IMR-90 (cell line): ENCODE measurements at regions of chr3 and their contacts with region 1.

Region 1: GRCh38 chr3:139654637-139655365 is 23.0 kb downstream of the NMNAT3 start:
- DNase-seq: no peak
- ATAC-seq: no peak
- H3K4me3 ChIP-seq: no peak overlapping the region
- H3K27ac ChIP-seq: no peak overlapping the region
- H3K4me1 ChIP-seq: no peaks in the 10 kb centered on the region
- H3K27me3 ChIP-seq: no peaks in the 10 kb centered on the region
- CTCF ChIP-seq: no peak
- POLR2A ChIP-seq: no peak
- RAD21 ChIP-seq: no peak

Region 2: DNA sequence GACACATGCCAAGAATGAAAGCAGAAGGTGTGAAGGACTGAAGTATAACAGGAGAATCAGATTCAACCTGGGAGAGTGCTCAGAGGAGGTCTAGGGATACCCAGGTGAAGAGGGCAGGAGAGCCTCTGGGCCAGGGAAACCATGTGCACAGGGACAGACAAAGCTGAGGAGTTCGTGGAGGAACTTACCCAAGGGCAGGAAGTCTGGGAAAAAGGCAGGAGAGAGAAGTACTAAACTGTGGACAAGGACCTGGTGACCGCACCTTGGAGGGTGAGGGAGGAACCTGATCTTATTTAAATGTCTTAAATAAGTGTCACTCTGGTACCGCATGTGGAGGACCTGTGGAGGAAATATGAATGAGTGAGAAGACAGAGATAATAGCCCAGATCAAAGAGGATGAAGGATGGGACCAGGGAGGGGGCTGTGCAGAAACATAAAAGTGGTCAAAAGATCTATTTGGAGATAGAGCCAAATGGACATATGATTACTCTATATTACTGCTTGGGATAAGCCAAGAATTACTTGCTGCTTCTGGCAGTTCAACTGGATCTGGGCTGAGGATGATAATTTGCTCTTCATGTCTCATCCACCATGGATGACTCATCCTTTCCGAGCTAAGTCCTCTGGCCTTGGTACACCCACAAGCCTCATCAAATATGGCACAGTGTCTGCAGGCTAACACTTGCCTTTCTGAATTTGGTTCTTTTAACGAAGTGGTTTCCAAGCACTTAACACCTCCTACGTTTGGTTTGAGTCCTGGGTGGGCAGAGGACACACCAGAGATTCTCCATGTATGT is 139.9 kb after region 1 on chr3:
- CTCF ChIA-PET with region 1: no interaction called
- POLR2A ChIA-PET with region 1: no interaction called
- dilution Hi-C with region 1: no loop called
- in situ Hi-C with region 1: no loop called
- intact Hi-C with region 1: loop called (anchors 5 kb)
- DNase-seq: no peak
- ATAC-seq: no peak
- H3K4me3 ChIP-seq: no peak overlapping the region
- H3K27ac ChIP-seq: no peak overlapping the region
- H3K4me1 ChIP-seq: no peaks in the 10 kb centered on the region
- H3K27me3 ChIP-seq: no peaks in the 10 kb centered on the region
- CTCF ChIP-seq: no peak
- POLR2A ChIP-seq: no peak
- RAD21 ChIP-seq: no peak